Activated CD4-positive, alpha-beta T cell treated with anti-CD3 and anti-CD28 coated beads, Interleukin-2, amount 10 ng/mL, durations not matched to agents 24 days and 14 days (primary cell): ENCODE measurements at regions of chr13 and their contacts with region 1.

Region 1: DNA sequence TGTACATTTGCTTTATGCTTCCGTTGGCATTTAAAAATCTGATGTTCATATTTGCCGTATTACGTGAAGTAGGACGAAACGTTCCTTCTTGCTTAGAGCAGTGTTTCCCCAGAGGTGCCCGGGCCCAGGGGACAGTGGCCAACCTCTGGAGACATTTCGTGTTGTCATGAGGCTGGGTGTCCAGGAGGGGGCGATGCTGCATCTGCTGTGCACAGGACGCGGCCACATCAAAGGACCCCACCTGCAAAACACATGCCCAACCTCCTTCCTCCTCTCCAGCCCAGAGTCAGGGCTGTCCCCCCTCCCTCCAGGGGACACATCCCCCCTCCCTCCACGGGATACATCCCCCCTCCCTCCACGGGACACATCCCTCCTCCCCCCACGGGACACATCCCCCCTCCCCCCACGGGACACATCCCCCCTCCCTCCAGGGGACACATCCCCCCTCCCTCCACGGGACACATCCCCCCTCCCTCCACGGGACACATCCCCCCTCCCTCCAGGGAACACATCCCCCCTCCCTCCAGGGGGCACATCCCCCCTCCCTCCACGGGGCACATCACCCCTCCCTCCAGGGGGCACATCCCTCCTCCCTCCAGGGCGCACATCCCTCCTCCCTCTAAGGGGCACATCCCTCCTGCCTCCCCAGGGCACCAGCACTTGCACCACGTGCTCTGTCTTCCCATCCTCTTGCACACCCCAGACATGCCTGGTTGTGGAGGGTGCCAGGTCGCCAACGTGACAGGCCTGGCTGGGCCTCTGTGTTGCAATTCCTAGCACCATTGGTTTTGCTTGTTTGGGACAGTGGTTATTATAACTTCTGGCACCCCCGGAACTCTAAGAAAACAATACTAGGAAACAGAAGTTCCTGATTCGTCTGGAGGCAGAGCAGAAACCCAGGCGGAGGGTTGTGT is 46.7 kb downstream of the GAS6 start:
- DNase-seq: peak; percentile 96
- H3K4me3 Mint-ChIP-seq: peak overlapping the region; percentile 98
- H3K27ac Mint-ChIP-seq: peak overlapping the region; percentile 78
- H3K4me1 Mint-ChIP-seq: peaks cover 17% of the 10 kb centered on the region
- H3K27me3 Mint-ChIP-seq: no peaks in the 10 kb centered on the region

Region 2: DNA sequence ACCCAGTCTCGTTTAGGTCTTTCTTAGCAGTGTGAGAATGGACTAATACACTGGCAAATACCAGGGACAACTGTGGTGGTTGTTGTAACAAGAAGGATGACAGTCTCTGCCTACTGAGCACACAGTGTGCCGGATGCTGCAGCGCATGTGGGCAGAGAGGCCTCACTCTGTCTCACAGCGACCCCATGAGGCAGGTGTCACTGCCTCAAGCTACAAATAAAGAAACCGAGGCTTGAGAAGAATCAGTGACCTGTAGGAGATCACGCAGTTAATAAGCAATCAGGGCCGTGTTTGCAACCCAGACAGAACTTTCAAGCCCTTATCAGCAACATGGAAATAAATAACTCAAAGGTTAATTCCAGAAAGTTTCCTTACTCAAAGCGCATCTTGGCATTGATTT is 87.2 kb after region 1 on chr13:
- intact Hi-C with region 1: loop called (anchors 5 kb)
- DNase-seq: peak; percentile 70
- H3K4me3 Mint-ChIP-seq: no peak overlapping the region
- H3K27ac Mint-ChIP-seq: no peak overlapping the region
- H3K4me1 Mint-ChIP-seq: no peaks in the 10 kb centered on the region
- H3K27me3 Mint-ChIP-seq: peaks cover 22% of the 10 kb centered on the region